H1 (cell line): ENCODE measurements at regions of chr22 and their contacts with region 1.

Region 1: GRCh38 chr22:31080848-31081649 is at the start of gene SMTN:
- DNase-seq: peak; percentile 79 to 99
- H3K4me3 ChIP-seq: peak within 1 kb of the TSS; percentile 69 to 80 (median 74)
- H3K27ac ChIP-seq: peak within 1 kb of the TSS; percentile 84; the same call in 1 of the 2 replicates
- H3K4me1 ChIP-seq: peaks cover 0 to 27% (median 16%) of the 10 kb centered on the region in 4 experiments; a peak in 6 of 7 replicates
- H3K27me3 ChIP-seq: peaks cover 0 to 5% (median 2%) of the 10 kb centered on the region in 4 experiments; a peak in 3 of 7 replicates
- CTCF ChIP-seq: no peak
- EP300 ChIP-seq: no peak
- POLR2A ChIP-seq: peak; percentile 76 to 88
- RAD21 ChIP-seq: no peak
- total RNA-seq, gene SMTN: 20.8 and 26.5 TPM in 2 replicates

Region 2: DNA sequence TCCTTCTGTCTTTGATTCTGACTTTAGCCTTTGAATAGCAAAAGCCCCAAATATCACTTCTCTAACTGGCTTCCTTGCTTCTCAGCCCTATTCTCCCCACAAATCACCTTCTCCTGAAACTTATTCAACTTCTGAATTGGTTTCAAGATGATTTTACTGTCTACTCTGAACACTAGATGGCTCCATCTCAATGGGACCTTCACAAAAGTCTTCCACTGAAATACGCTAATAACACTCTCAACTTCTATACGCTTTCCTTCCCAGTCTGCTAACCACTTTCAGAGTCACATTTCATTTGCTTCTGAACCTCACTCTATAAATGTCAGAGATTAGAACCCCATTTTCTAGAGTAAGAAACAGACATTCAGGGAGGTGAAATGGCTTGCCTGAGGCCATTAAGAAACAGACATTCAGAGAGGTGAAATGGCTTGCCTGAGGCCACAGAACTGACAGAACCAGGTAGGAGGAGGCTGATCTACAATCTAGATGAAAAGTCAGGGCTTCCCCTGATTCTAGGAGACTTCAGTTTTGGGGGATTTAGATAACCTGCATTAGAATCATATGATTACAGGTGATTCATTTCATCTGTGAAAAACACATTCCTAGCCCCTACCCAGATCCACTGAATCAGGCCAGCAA is 133.1 kb before region 1 on chr22:
- CTCF ChIA-PET with region 1: interaction called, 37 read pairs
- POLR2A ChIA-PET with region 1: interaction called, 12 read pairs
- DNase-seq: no peak
- H3K4me3 ChIP-seq: no peak overlapping the region
- H3K27ac ChIP-seq: no peak overlapping the region
- H3K4me1 ChIP-seq: no peaks in the 10 kb centered on the region
- H3K27me3 ChIP-seq: no peaks in the 10 kb centered on the region
- CTCF ChIP-seq: peak in 1 of 3 experiments; percentile 40; a peak in 2 of 4 replicates
- EP300 ChIP-seq: no peak
- POLR2A ChIP-seq: no peak
- RAD21 ChIP-seq: peak; percentile 38 to 41; a peak in 2 of 4 replicates

Region 3: GRCh38 chr22:31055635-31056159 is 25.4 kb before region 1 on chr22:
- CTCF ChIA-PET with region 1: interaction called, 10 read pairs
- POLR2A ChIA-PET with region 1: interaction called, 5 read pairs
- DNase-seq: no peak
- H3K4me3 ChIP-seq: no peak overlapping the region
- H3K27ac ChIP-seq: no peak overlapping the region
- H3K4me1 ChIP-seq: peaks cover 0 to 3% (median 0%) of the 10 kb centered on the region in 4 experiments; a peak in 1 of 7 replicates
- H3K27me3 ChIP-seq: no peaks in the 10 kb centered on the region
- CTCF ChIP-seq: no peak
- EP300 ChIP-seq: no peak
- POLR2A ChIP-seq: no peak
- RAD21 ChIP-seq: no peak

Region 4: DNA sequence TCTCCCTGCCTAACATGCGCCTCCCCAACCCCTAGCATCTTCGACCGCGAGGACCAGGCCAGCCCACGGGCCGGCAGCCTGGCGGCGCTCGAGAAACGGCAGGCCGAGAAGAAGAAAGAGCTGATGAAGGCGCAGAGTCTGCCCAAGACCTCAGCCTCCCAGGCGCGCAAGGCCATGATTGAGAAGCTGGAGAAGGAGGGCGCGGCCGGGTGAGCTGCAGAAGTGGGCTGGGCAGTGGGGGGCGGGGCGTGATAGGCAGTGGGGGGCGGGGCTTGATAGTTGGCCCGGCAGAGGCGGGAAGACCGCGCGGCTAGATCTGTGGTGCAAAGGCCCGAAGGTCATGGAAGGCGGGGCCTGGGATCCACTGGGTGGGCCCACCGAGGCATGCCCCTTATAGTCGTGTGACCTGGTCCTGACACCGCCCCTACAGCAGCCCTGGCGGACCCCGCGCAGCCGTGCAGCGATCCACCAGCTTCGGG is 17.6 kb after region 1 on chr22:
- CTCF ChIA-PET with region 1: interaction called, 207 read pairs
- POLR2A ChIA-PET with region 1: interaction called, 57 read pairs
- DNase-seq: peak in 1 of 2 experiments; percentile 88
- H3K4me3 ChIP-seq: peak overlapping the region; percentile 8 to 50 (median 18); a peak in 5 of 8 replicates
- H3K27ac ChIP-seq: no peak overlapping the region
- H3K4me1 ChIP-seq: peaks cover 5 to 15% (median 11%) of the 10 kb centered on the region in 4 experiments
- H3K27me3 ChIP-seq: no peaks in the 10 kb centered on the region
- CTCF ChIP-seq: peak in 1 of 3 experiments; percentile 15; a peak in 1 of 4 replicates
- EP300 ChIP-seq: no peak
- POLR2A ChIP-seq: no peak
- RAD21 ChIP-seq: peak in 1 of 2 experiments; percentile 19; a peak in 1 of 4 replicates

Region 5: GRCh38 chr22:31160328-31160978 is 79.4 kb after region 1 on chr22:
- CTCF ChIA-PET with region 1: interaction called, 4 read pairs
- POLR2A ChIA-PET with region 1: interaction called, 11 read pairs
- DNase-seq: peak in 1 of 2 experiments; percentile 63
- H3K4me3 ChIP-seq: peak overlapping the region; percentile 71 to 87 (median 74)
- H3K27ac ChIP-seq: 0 out of 2 replicates have a peak overlapping the region, but pooled peaks have one; percentile 23
- H3K4me1 ChIP-seq: peaks cover 0 to 8% (median 1%) of the 10 kb centered on the region in 4 experiments; a peak in 2 of 7 replicates
- H3K27me3 ChIP-seq: peaks cover 0 to 25% (median 7%) of the 10 kb centered on the region in 4 experiments; a peak in 6 of 7 replicates
- CTCF ChIP-seq: no peak
- EP300 ChIP-seq: no peak
- POLR2A ChIP-seq: no peak
- RAD21 ChIP-seq: no peak

Region 6: DNA sequence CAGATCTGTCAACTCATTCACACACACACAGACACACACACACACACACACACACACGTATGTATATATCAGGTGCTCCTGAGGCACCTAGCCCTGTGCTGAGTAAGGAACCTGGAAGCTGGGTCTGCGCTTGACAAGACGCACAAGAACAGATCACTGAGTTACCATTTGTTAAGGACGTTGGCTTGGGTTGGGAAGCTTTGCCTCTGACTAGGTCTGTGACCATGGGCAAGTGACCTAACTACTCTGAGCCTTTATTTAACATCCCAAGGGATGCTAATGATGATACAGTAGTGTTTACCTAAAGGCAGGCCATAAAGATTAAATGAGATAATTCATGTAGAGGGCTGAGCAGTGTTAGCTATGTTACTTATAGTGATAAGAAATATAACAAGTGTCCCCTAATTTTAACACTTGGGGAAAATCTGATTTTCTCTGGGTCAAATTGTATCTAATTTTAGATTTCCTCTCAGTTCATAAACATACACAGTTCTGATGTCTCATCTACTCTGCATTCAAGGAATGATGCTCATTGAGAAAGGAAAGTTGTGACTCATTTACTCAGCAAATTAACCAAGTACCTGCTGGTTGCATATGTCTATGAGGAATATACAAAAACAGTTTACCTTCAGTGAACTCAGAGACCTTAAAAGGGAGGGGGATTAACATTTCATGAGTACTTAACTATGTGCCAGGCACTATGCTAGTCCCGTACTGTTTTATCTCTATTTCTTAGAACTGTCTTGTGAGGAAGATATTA is 92.5 kb after region 1 on chr22:
- CTCF ChIA-PET with region 1: no interaction called
- POLR2A ChIA-PET with region 1: no interaction called
- DNase-seq: no peak
- H3K4me3 ChIP-seq: no peak overlapping the region
- H3K27ac ChIP-seq: no peak overlapping the region
- H3K4me1 ChIP-seq: no peaks in the 10 kb centered on the region
- H3K27me3 ChIP-seq: no peaks in the 10 kb centered on the region
- CTCF ChIP-seq: no peak
- EP300 ChIP-seq: no peak
- POLR2A ChIP-seq: no peak
- RAD21 ChIP-seq: no peak

Region 7: GRCh38 chr22:31192513-31192912 is 111.5 kb after region 1 on chr22:
- CTCF ChIA-PET with region 1: no interaction called
- POLR2A ChIA-PET with region 1: no interaction called
- DNase-seq: no peak
- H3K4me3 ChIP-seq: no peak overlapping the region
- H3K27ac ChIP-seq: no peak overlapping the region
- H3K4me1 ChIP-seq: no peaks in the 10 kb centered on the region
- H3K27me3 ChIP-seq: no peaks in the 10 kb centered on the region
- CTCF ChIP-seq: no peak
- EP300 ChIP-seq: no peak
- POLR2A ChIP-seq: no peak
- RAD21 ChIP-seq: no peak